Natural killer cell (primary cell): ENCODE measurements at regions of chr12 and their contacts with region 1.

Region 1: GRCh38 chr12:19186722-19187661 is 57.5 kb downstream of the PLEKHA5 start:
- DNase-seq: peak in 1 of 2 donors; percentile 56
- ATAC-seq: no peak
- H3K4me3 ChIP-seq: no peak overlapping the region
- H3K4me3 Mint-ChIP-seq: no peak overlapping the region
- H3K27ac ChIP-seq: no peak overlapping the region
- H3K27ac Mint-ChIP-seq: no peak overlapping the region
- H3K4me1 ChIP-seq: no peaks in the 10 kb centered on the region
- H3K4me1 Mint-ChIP-seq: no peaks in the 10 kb centered on the region
- H3K27me3 ChIP-seq: no peaks in the 10 kb centered on the region
- H3K27me3 Mint-ChIP-seq: no peaks in the 10 kb centered on the region
- CTCF ChIP-seq: peak; percentile 62

Region 2: GRCh38 chr12:18250313-18250916 is 936.6 kb before region 1 on chr12:
- intact Hi-C with region 1: loop called (anchors 5 kb)
- DNase-seq: peak in 1 of 2 donors; percentile 10
- ATAC-seq: no peak
- H3K4me3 ChIP-seq: no peak overlapping the region
- H3K4me3 Mint-ChIP-seq: no peak overlapping the region
- H3K27ac ChIP-seq: no peak overlapping the region
- H3K27ac Mint-ChIP-seq: no peak overlapping the region
- H3K4me1 ChIP-seq: no peaks in the 10 kb centered on the region
- H3K4me1 Mint-ChIP-seq: no peaks in the 10 kb centered on the region
- H3K27me3 ChIP-seq: no peaks in the 10 kb centered on the region
- H3K27me3 Mint-ChIP-seq: no peaks in the 10 kb centered on the region
- CTCF ChIP-seq: no peak

Region 3: GRCh38 chr12:18861287-18861858 is 325.6 kb before region 1 on chr12:
- intact Hi-C with region 1: loop called (anchors 1 kb)
- DNase-seq: peak in 1 of 2 donors; percentile 36
- ATAC-seq: no peak
- H3K4me3 ChIP-seq: no peak overlapping the region
- H3K4me3 Mint-ChIP-seq: no peak overlapping the region
- H3K27ac ChIP-seq: no peak overlapping the region
- H3K27ac Mint-ChIP-seq: no peak overlapping the region
- H3K4me1 ChIP-seq: no peaks in the 10 kb centered on the region
- H3K4me1 Mint-ChIP-seq: no peaks in the 10 kb centered on the region
- H3K27me3 ChIP-seq: no peaks in the 10 kb centered on the region
- H3K27me3 Mint-ChIP-seq: peaks cover 0 to 8% of the 10 kb centered on the region in 2 donors
- CTCF ChIP-seq: peak; percentile 40

Region 4: DNA sequence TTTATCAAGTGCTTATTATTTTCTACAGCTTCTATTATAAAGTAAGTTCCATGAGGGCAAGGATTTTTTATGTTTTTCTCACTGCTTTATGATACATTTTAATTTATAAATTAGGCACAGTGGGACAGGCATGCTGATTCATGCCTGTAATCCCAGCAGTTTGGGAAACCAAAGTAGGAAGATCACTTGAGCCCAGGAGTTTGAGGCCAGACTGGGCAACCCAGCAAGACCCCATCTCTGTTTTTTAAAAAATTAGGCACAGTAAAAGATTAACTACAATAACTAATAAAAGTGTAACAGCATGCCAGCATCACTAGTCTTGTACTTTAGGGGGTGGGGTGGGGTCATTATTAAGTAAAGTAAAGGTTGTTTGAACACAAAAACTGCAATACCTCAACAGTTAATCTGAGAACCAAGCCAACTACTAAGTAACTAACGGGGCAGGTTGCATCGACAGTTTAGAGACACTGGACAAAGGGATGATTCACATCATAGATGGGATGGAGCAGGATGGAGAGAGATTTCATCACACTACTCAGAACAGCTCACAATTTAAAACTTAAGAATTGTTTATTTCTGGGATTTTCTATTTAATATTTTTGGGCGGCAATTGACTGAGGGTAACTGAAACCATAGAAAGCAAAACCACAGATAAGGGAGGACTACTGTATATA is 62.1 kb after region 1 on chr12:
- intact Hi-C with region 1: no loop called
- DNase-seq: no peak
- ATAC-seq: no peak
- H3K4me3 ChIP-seq: no peak overlapping the region
- H3K4me3 Mint-ChIP-seq: no peak overlapping the region
- H3K27ac ChIP-seq: no peak overlapping the region
- H3K27ac Mint-ChIP-seq: no peak overlapping the region
- H3K4me1 ChIP-seq: no peaks in the 10 kb centered on the region
- H3K4me1 Mint-ChIP-seq: no peaks in the 10 kb centered on the region
- H3K27me3 ChIP-seq: no peaks in the 10 kb centered on the region
- H3K27me3 Mint-ChIP-seq: no peaks in the 10 kb centered on the region
- CTCF ChIP-seq: no peak